Left colon (tissue), 2 donors: ENCODE measurements at regions of chr4 and their contacts with region 1.

Region 1: DNA sequence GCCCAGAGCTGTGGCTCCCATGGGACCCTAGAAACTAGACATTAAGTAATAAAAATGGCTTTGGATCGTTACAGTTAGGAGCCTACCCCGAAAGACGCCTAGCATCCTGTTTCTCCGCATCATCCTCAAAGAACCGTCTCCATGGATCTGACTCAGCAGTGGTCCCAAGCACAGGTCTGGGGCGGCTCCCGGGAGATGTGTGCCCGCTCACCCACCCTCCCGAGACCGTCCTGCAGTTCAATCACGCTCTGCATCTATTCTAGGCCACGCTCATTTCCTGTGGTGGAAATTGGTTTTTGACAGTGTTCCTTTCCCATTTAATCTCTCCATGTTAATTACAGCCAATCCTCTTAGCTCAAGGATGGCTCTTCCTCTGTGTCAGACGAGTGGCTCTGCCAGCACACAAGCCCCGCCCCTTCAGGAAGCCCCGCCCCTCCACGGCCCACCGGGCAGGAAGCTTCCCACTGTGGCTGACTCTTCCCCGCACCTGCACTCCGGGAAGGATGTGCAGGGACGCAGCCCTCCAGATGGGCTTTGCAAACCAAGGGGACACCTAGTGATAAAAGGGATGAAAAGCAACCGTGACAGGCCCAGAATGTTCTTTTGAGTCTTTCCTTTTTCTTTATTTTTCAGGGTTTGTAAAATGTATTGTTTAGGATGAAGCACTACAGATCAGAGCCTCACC is 34.5 kb upstream of the HELT start:
- DNase-seq: peak; percentile 71 to 78
- ATAC-seq: peak; percentile 95

Region 2: DNA sequence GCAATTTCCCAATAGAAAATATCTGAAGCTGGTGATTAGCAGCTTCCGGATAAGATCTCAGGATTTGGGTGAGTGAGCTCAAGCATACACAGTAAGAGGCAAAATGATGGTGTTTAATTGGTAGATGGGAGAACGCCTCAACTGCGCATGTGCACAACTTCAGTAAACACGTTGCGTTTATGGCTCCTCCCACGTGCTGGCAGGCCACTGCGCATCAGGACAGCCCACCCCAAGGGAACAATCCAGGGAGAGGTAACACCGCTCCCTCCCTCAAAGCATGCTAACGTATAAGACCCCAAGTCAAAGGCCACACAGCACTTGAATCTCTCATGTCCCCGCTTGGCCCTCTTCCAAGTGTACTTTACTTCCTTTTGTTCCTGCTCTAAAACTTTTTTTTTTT is 239.6 kb before region 1 on chr4:
- intact Hi-C with region 1: loop called in 1 of 2 experiments (anchors 5 kb)
- DNase-seq: no peak
- ATAC-seq: no peak